Heart left ventricle (tissue), 16 donors: ENCODE measurements at regions of chr22 and their contacts with region 1.

Region 1: DNA sequence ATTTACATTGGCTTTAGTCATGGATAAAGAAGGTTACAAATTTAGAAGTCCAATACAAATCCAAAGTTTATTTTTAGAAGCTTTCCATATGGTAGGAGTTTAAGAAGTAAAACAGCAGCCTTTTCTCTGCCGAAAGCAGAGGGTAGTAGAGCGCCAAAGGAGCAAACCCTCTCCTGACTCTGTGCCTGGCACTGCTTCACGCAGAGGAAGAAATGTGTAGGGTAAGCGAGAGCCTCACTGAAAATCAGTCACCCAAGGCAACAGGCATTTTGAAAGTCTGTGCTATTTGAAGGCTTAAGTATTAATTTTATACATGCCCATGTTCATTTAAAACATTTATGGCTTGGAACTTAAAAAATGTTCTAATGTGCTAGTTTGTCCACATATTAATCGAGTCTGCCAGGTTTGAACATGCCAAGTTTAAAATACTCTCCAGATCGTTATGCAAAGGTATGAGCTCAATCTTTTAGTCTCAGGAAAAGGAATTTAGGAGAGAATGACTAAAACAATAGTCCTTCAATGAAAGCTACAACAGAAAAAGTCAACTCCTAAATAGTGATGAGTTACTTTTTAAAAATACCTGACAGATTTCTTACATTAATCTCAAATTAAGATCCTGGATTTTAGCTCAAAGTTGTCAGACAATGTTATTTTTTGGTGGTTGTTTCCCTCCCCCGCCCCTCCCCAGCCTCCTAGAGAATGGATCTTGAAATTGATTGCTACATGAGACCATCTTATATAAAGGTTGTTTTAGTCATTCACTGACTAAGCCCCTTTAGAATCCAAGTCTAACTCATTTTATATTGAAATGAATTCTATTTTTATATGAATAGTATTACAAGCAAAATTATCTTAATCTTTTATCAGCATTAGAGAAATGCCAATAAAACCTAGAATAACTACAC is 38.7 kb downstream of the MRTFA start:
- DNase-seq: no peak
- ATAC-seq: peak in 1 of 4 donors; percentile 36
- H3K4me3 ChIP-seq: no peak overlapping the region
- H3K27ac ChIP-seq: peak overlapping the region in 1 of 12 donors; percentile 5
- H3K4me1 ChIP-seq: peaks cover 0 to 76% (median 45%) of the 10 kb centered on the region in 12 donors
- H3K27me3 ChIP-seq: no peaks in the 10 kb centered on the region
- CTCF ChIP-seq: no peak
- POLR2A ChIP-seq: no peak

Region 2: DNA sequence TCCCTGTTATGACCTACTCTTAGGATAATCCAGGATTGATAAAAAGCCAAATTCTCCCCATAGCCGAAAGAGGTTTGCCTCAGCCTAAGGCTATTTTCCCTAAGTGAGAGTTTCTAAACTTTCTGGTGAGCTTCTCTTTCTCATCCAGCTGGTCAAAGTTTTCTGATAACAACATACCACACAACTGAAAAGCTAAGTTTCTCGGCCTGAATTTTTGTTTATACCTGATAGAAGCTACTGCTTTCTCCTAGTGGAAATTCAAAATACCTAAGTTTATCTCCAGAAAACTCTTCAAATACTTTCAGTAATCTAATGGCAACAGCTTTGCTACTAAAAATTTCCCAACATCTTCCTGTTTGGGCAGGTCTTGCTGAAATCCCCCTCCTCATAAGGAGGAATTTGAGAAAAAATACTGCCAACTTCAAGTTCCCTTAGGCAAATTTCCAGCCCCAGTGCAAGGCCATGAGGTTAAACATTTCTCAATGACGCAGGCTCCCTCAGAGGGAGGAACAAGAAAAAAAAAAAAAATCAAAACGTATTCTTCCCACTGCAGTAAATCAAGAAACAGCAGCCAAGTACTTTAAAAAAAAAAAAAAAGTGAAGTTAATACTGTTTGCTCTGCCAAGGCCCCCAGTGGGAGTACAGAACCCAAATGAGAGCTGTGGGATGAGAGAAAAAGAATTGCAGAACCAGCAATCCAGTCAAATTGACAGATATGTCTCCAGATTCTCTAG is 88.2 kb before region 1 on chr22:
- intact Hi-C with region 1: loop called in 1 of 10 experiments (anchors 5 kb)
- DNase-seq: peak in 4 of 5 donors; percentile 37 to 74 (median 64)
- ATAC-seq: peak; percentile 63 to 84 (median 75)
- H3K4me3 ChIP-seq: peak overlapping the region in 1 of 12 donors; percentile 5
- H3K27ac ChIP-seq: peak overlapping the region; percentile 68 to 92 (median 78)
- H3K4me1 ChIP-seq: peaks cover 6 to 80% (median 55%) of the 10 kb centered on the region in 12 donors
- H3K27me3 ChIP-seq: no peaks in the 10 kb centered on the region
- CTCF ChIP-seq: no peak
- POLR2A ChIP-seq: no peak

Region 3: DNA sequence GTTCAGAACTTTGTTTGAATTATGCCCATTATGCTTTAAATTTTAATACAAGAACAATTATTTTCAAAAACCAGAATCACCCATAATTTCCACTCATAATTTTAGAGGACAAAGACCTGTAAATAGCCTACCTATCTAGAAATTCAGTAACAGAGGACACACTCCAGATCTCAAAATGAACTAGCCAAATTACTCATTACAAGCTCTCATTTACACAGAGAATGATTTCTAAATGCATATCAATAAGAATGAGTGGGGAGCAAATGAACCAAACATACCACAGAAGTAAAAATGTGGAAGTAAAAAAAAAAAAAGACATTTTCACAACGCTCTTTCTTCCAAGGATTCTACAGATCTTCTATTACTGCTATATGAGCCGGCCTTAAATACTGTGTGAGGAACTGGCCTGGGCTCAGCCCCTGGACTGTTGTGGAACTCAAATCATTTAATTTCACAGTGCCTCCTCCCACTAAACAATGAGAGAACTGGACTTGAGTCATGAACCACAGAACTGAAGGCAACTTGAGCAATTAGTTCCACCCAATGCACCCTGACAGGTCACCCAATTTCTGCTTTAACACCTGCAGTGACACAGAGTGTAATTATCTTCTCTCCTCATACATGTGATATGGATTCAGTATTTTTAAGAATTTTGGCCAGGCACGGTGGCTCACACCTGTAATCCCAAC is 30.7 kb after region 1 on chr22:
- intact Hi-C with region 1: loop called in 1 of 10 experiments (anchors 5 kb)
- DNase-seq: no peak
- ATAC-seq: peak in 2 of 4 donors; percentile 7 to 50
- H3K4me3 ChIP-seq: no peak overlapping the region
- H3K27ac ChIP-seq: no peak overlapping the region
- H3K4me1 ChIP-seq: peaks cover 0 to 58% (median 23%) of the 10 kb centered on the region in 12 donors
- H3K27me3 ChIP-seq: no peaks in the 10 kb centered on the region
- CTCF ChIP-seq: no peak
- POLR2A ChIP-seq: no peak

Region 4: DNA sequence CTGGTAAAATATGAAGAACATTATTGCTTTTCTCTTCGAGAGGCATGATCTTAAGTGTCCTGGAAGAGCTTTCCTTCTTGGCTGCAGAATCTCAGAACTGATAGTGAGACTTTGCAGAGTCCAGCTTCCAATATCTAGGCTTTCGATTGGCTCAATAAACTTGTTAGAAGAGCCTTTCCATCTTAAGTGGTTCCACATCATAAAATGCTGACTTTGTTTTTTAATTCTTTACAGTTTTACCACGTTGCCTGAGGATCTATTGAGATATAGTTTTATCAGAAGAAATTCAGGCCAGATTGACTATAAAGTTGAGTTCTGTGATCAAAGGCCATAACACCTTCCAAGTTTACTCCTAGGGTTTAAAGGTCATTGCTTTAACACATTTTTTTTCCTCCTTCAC is 279.7 kb after region 1 on chr22:
- intact Hi-C with region 1: no loop called
- DNase-seq: no peak
- ATAC-seq: no peak
- H3K4me3 ChIP-seq: no peak overlapping the region
- H3K27ac ChIP-seq: no peak overlapping the region
- H3K4me1 ChIP-seq: no peaks in the 10 kb centered on the region
- H3K27me3 ChIP-seq: no peaks in the 10 kb centered on the region
- CTCF ChIP-seq: no peak
- POLR2A ChIP-seq: no peak